ENCODE measurements at regions of chr1 and their contacts with region 1.

Region 1: GRCh38 chr1:235075188-235075926 is 53.3 kb downstream of the TOMM20 start:
- DNase-seq: no peak
- H3K4me3 ChIP-seq: no peak overlapping the region
- H3K27ac ChIP-seq: peak overlapping the region; percentile 10
- H3K4me1 ChIP-seq: peaks cover 52% of the 10 kb centered on the region
- H3K27me3 ChIP-seq: no peaks in the 10 kb centered on the region
- CTCF ChIP-seq: no peak

Region 2: GRCh38 chr1:234842726-234843641 is 232.4 kb before region 1 on chr1:
- dilution Hi-C with region 1: no loop called
- DNase-seq: no peak
- H3K4me3 ChIP-seq: no peak overlapping the region
- H3K27ac ChIP-seq: no peak overlapping the region
- H3K4me1 ChIP-seq: no peaks in the 10 kb centered on the region
- H3K27me3 ChIP-seq: no peaks in the 10 kb centered on the region
- CTCF ChIP-seq: no peak

Region 3: GRCh38 chr1:234875953-234876855 is 199.2 kb before region 1 on chr1:
- dilution Hi-C with region 1: loop called (anchors 10 kb)
- DNase-seq: no peak
- H3K4me3 ChIP-seq: no peak overlapping the region
- H3K27ac ChIP-seq: no peak overlapping the region
- H3K4me1 ChIP-seq: peaks cover 9% of the 10 kb centered on the region
- H3K27me3 ChIP-seq: no peaks in the 10 kb centered on the region
- CTCF ChIP-seq: no peak

Region 4: GRCh38 chr1:234918181-234918841 is 157.0 kb before region 1 on chr1:
- dilution Hi-C with region 1: no loop called
- DNase-seq: no peak
- H3K4me3 ChIP-seq: no peak overlapping the region
- H3K27ac ChIP-seq: no peak overlapping the region
- H3K4me1 ChIP-seq: no peaks in the 10 kb centered on the region
- H3K27me3 ChIP-seq: no peaks in the 10 kb centered on the region
- CTCF ChIP-seq: no peak

Region 5: GRCh38 chr1:234978397-234979295 is 96.7 kb before region 1 on chr1:
- dilution Hi-C with region 1: loop called (anchors 10 kb)
- DNase-seq: no peak
- H3K4me3 ChIP-seq: no peak overlapping the region
- H3K27ac ChIP-seq: no peak overlapping the region
- H3K4me1 ChIP-seq: peaks cover 35% of the 10 kb centered on the region
- H3K27me3 ChIP-seq: no peaks in the 10 kb centered on the region
- CTCF ChIP-seq: no peak